Activated CD4-positive, alpha-beta T cell treated with anti-CD3 and anti-CD28 coated beads for 36 hours (primary cell): ENCODE measurements at regions of chr6 and their contacts with region 1.

Region 1: GRCh38 chr6:31356946-31357466 is at the start of gene HLA-B:
- DNase-seq: peak; percentile 91
- ATAC-seq: peak; percentile 80
- H3K4me3 Mint-ChIP-seq: peak within 1 kb of the TSS; percentile 98
- H3K27ac Mint-ChIP-seq: peak within 1 kb of the TSS; percentile 99
- H3K4me1 Mint-ChIP-seq: peaks cover 56% of the 10 kb centered on the region
- H3K27me3 Mint-ChIP-seq: peaks cover 5% of the 10 kb centered on the region
- total RNA-seq, gene HLA-B: 2,101 to 2,412 TPM

Region 2: DNA sequence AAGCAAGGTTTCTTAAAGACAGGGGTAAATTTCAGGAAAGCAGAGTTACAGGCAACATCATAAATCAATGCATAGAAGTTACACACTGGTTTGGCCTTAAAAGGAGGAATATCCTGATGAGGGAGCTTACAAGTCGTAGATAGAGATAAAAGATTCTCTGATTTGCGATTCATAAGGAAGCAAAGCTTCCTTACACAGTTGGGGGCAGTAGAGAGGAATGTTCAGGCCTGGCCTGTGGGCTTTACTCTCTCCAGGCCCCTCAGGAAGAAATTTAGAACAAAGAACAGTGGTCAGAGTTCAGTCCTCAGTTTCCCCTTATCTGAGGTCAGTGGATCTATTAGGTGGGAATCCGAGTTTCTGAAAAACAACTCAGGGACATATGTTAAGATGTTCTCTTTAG is 104.4 kb before region 1 on chr6:
- CTCF ChIA-PET with region 1: no interaction called
- POLR2A ChIA-PET with region 1: no interaction called
- intact Hi-C with region 1: no loop called
- DNase-seq: no peak
- ATAC-seq: no peak
- H3K4me3 Mint-ChIP-seq: no peak overlapping the region
- H3K27ac Mint-ChIP-seq: no peak overlapping the region
- H3K4me1 Mint-ChIP-seq: no peaks in the 10 kb centered on the region
- H3K27me3 Mint-ChIP-seq: peaks cover 3% of the 10 kb centered on the region

Region 3: GRCh38 chr6:31332637-31333602 is 24.1 kb before region 1 on chr6:
- CTCF ChIA-PET with region 1: interaction called, 4 read pairs
- POLR2A ChIA-PET with region 1: no interaction called
- intact Hi-C with region 1: loop called (anchors 1 to 2 kb)
- DNase-seq: peak; percentile 64
- ATAC-seq: peak; percentile 91
- H3K4me3 Mint-ChIP-seq: peak overlapping the region; percentile 48
- H3K27ac Mint-ChIP-seq: peak overlapping the region; percentile 73
- H3K4me1 Mint-ChIP-seq: peaks cover 19% of the 10 kb centered on the region
- H3K27me3 Mint-ChIP-seq: no peaks in the 10 kb centered on the region

Region 4: DNA sequence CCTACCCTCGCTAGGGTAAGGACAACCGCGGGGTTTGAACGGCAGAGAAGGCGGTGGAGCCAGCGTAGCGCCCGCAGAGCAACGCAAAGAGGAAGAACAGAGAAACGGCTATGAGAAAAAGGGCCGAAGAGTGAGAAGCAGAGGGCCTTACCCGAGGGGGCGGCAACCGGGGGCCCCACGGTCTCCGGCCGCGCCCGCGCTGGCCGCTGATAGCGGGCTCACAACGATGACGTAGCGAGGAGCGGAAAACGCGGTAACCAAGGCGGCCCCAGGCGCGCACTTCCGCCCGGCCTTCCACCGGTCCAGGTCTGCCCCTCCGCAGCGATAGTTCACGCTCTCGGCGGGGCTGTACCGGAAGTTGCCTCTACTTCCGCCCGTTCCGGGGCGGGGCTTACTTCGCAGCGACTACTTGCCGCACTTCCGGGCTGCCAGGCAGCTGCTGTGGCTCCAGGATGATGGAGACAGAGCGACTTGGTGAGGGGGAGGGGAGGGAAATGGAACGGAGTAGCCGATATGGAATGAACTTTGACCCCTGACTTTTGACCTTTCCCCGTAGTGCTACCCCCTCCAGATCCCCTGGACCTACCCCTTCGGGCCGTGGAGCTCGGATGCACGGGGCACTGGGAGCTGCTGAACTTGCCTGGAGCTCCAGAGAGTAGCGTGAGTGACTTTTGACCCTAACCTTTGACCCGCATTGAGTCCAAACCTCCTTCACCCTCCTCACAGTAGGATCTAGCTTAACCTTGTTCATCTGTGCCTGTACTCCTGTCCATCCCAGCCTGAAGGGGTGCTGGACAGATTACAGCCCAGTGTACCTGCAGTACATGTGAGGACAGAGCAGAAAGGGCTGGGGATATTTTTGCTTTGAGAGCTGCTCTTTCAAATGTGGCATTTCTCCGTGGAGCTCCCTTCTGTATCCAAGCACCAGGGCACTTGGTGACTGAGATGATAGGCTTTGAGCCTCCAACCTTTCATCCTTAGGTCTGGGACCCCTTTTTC is 602.0 kb after region 1 on chr6 and contains the starts of genes NELFE and SKIC2:
- CTCF ChIA-PET with region 1: no interaction called
- POLR2A ChIA-PET with region 1: no interaction called
- intact Hi-C with region 1: no loop called
- DNase-seq: peak; percentile 99
- ATAC-seq: peak; percentile 99
- H3K4me3 Mint-ChIP-seq: peak within 1 kb of the TSS; percentile 95
- H3K27ac Mint-ChIP-seq: peak within 1 kb of the TSS; percentile 98
- H3K4me1 Mint-ChIP-seq: peaks cover 34% of the 10 kb centered on the region
- H3K27me3 Mint-ChIP-seq: no peaks in the 10 kb centered on the region
- total RNA-seq, gene NELFE: 74.3 to 95.1 TPM
- total RNA-seq, gene SKIC2: 90.2 to 104 TPM